Activated CD8-positive, alpha-beta memory T cell treated with anti-CD3 and anti-CD28 coated beads, Interleukin-2, amount 10 ng/mL, durations not matched to agents 7 days and 5 days (primary cell): ENCODE measurements at regions of chr11 and their contacts with region 1.

Region 1: GRCh38 chr11:77994412-77995362 is at the start of gene INTS4:
- DNase-seq: peak; percentile 100
- ATAC-seq: peak; percentile 99
- H3K4me3 Mint-ChIP-seq: peak within 1 kb of the TSS; percentile 94
- H3K27ac Mint-ChIP-seq: peak within 1 kb of the TSS; percentile 91
- H3K4me1 Mint-ChIP-seq: peaks cover 24% of the 10 kb centered on the region
- H3K27me3 Mint-ChIP-seq: no peaks in the 10 kb centered on the region
- total RNA-seq, gene INTS4: 53.9 to 57.9 TPM

Region 2: DNA sequence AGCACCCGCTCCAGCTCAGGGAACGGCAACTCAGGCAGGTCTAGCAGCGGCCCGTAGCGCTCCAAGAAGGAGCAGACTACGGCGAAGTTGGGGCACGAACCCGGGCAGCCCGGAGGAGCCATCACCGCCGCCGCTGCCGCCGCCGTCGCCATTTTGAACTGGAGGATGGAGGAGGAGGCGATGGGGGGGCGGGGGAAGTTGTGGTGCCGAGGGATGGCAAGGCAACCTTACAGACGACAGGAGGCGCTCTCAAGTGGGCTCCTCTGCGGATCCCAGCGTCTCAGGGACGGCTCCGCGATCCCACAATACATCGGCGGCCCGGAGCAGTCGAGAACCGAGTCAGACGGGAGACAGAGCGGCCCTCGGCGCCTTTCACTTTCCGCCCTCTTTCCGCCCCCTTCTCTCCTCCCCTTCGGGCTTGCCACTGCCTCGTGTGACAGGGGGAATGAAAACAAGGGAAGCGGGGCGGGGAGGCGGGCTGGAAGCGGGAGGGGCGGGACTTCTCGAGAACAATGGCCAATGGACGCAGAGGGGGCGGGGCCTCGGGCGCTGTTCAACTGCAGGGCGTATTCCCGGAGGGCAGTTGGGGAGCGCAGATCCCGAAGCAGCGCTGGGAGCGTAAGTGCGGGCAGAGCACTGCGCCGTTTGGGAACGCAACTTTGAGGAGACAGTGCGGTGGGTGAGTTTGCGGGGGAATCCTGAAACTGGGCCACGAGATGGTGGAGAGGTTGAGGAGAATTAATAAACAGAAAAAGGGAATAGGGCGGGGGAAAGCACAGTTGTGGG is 173.9 kb before region 1 on chr11 and contains the starts of genes AAMDC and RSF1:
- CTCF ChIA-PET with region 1: interaction called, 25 read pairs
- DNase-seq: peak; percentile 97
- ATAC-seq: peak; percentile 87
- H3K4me3 Mint-ChIP-seq: peak within 1 kb of the TSS; percentile 99
- H3K27ac Mint-ChIP-seq: peak within 1 kb of the TSS; percentile 97
- H3K4me1 Mint-ChIP-seq: peaks cover 33% of the 10 kb centered on the region
- H3K27me3 Mint-ChIP-seq: no peaks in the 10 kb centered on the region
- total RNA-seq, gene AAMDC: 9.9 to 13.2 TPM
- total RNA-seq, gene RSF1: 49.4 to 54.6 TPM

Region 3: DNA sequence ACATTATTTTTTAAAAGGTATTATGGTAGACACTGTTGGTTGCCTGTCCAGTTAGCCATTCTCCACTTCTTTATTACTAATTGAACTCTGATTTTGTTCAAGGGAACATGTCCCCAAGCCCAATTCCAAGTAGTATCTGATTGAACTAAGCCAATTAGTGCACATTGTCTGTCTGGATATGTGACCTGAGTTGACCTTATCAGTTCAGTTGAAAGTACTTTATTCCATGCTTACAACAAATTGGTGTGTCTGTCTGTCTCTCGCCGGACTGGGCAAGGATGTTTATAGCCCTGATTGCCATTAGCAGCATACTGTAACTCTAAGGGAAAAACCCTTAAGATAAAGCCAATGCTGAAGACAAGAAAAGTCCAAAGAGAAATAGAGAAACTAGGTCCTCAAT is 85.9 kb before region 1 on chr11:
- CTCF ChIA-PET with region 1: no interaction called
- DNase-seq: no peak
- ATAC-seq: no peak
- H3K4me3 Mint-ChIP-seq: no peak overlapping the region
- H3K27ac Mint-ChIP-seq: no peak overlapping the region
- H3K4me1 Mint-ChIP-seq: no peaks in the 10 kb centered on the region
- H3K27me3 Mint-ChIP-seq: no peaks in the 10 kb centered on the region

Region 4: DNA sequence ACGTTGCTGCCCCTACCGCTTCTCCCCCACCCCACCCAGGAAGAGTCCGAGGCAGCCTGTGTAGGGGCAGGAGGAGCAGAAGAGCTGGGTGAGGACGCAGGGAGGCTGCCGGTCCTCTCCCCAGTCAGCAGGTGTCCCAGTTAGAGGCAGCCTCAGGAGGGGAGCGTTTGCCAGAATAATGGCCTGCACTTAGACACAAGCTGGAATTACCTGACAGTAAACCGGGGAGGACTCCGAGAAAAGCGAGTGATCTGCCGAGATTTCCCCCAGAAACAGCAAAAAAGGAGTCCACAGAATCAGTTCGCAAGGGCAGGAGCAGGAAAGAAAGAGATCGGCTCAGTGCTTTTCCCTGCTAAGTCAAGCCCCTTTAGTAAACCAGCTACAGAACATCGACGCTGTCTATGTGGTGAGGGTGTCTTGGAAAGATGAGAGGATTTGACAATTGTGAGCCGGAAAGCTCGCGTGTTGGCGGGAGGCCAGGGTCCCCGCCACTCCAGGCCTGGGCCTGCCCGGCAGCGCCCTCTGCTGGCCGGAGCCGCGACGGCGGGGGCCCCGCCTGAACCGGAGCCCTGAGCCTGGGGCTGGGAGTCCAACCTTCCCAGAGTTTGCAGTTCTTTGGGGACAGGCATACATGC is 51.3 kb after region 1 on chr11:
- CTCF ChIA-PET with region 1: interaction called, 13 read pairs
- DNase-seq: peak; percentile 74
- ATAC-seq: peak; percentile 98
- H3K4me3 Mint-ChIP-seq: peak overlapping the region; percentile 29
- H3K27ac Mint-ChIP-seq: no peak overlapping the region
- H3K4me1 Mint-ChIP-seq: peaks cover 19% of the 10 kb centered on the region
- H3K27me3 Mint-ChIP-seq: no peaks in the 10 kb centered on the region